Motor neuron (in vitro differentiated cells): ENCODE measurements at regions of chr22 and their contacts with region 1.

Region 1: GRCh38 chr22:39520054-39520891 is at the start of gene ATF4:
- ATAC-seq: peak; percentile 61 to 89 (median 84)
- H3K4me3 ChIP-seq: peak within 1 kb of the TSS; percentile 93 to 100 (median 95)
- H3K27ac ChIP-seq: peak within 1 kb of the TSS; percentile 99 to 100
- H3K4me1 ChIP-seq: peaks cover 24 to 26% of the 10 kb centered on the region in 2 donors
- total RNA-seq, gene ATF4: 351 to 694 (median 479) TPM

Region 2: GRCh38 chr22:39343259-39344048 is 176.8 kb before region 1 on chr22:
- in situ Hi-C with region 1: loop called in 2 of 9 experiments (anchors 25 kb)
- ATAC-seq: peak; percentile 74 to 98 (median 91)
- H3K4me3 ChIP-seq: no peak overlapping the region
- H3K27ac ChIP-seq: no peak overlapping the region
- H3K4me1 ChIP-seq: peaks cover 0 to 2% of the 10 kb centered on the region in 2 donors

Region 3: DNA sequence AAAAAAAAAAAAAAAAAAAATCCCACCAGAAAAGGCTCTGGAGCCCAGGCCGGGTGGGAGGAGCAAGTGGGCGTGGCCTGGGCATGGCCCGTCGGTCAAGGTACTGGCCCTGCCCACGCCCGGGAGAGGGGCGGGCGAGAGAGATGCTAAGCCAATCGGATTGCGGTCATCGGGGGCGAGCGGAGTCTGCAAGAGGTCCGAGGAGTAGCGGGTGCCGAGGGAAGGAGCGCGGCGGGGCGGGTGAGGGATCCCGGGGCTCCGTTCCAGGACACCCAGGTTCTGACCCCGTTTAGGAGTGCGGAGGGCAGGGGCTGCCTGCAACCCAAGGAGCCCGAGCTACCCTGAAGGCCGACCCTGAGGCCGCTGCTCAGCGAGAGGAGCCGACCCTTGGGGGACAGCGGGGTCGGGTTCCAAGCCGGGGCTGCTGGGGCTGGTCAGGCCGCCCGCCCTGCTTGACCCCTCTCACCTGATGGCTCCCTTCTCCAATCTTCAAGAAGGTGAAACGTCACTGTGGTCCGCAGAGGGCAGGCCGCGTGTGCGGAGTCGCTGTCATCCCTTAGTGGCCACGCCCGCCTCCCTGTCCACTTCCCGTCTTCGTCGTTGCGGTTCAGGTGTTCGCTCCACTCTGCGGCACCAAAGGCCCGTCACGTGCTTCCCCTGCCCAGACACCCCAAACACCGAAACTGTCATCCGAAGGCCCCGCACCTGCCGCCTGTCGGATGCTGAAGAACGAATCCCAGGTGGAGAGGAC is 131.8 kb before region 1 on chr22:
- in situ Hi-C with region 1: loop called in 1 of 9 experiments (anchors 25 kb)
- ATAC-seq: peak; percentile 94 to 98 (median 96)
- H3K4me3 ChIP-seq: peak overlapping the region; percentile 32 to 48 (median 44)
- H3K27ac ChIP-seq: peak overlapping the region in 1 of 2 donors; percentile 64
- H3K4me1 ChIP-seq: no peaks in the 10 kb centered on the region

Region 4: DNA sequence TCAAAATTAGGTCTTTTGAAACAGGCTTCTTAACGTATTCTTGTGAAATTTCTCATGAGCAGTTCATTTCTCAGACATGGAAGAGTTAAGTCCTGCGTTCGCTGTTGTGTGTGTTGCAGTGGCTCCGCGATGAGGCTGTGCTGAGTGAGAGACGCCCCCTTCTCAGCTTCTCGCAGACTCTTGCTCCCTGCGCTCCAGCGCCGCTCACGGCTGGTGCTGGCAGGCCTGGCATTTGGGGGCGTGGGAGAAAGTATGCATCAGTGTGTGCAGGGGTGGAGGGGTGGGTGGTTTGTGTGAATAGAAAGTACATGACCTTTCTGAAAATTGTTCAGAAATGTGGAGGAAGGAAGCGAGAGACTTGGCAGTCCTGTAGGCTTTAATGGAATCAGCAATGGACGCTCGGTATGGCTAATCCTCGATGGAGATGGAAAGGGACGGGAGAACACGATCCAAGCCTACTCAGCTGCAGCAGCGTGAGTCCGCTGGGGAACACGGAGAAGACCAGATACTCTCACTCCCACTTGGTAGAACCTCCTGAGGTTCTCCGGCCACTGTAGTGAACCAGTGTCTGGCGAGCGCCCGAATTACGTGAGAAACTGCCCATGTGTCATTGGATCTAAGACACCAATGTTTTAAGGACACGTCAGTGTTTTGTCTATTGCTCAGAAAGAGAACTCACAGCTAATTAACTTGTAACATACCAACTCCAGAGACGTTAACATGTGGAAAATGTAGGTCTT is 114.8 kb before region 1 on chr22:
- in situ Hi-C with region 1: loop called in 1 of 9 experiments (anchors 25 kb)
- ATAC-seq: peak; percentile 74 to 91 (median 84)
- H3K4me3 ChIP-seq: no peak overlapping the region
- H3K27ac ChIP-seq: no peak overlapping the region
- H3K4me1 ChIP-seq: peaks cover 5 to 11% of the 10 kb centered on the region in 2 donors